ENCODE measurements at regions of chr16 and their contacts with region 1.

Region 1: GRCh38 chr16:57994778-57995177 is 5.7 kb downstream of the ZNF319 start:
- DNase-seq: peak; percentile 47 to 52
- ATAC-seq: peak in 6 of 8 donors; percentile 41 to 73 (median 54)
- H3K4me3 ChIP-seq: no peak overlapping the region
- H3K27ac ChIP-seq: peak overlapping the region in 2 of 10 donors; percentile 35 to 48
- H3K4me1 ChIP-seq: peaks cover 9 to 47% (median 34%) of the 10 kb centered on the region in 9 donors
- H3K27me3 ChIP-seq: no peaks in the 10 kb centered on the region
- CTCF ChIP-seq: peak in 7 of 9 donors; percentile 27 to 60 (median 42)

Region 2: DNA sequence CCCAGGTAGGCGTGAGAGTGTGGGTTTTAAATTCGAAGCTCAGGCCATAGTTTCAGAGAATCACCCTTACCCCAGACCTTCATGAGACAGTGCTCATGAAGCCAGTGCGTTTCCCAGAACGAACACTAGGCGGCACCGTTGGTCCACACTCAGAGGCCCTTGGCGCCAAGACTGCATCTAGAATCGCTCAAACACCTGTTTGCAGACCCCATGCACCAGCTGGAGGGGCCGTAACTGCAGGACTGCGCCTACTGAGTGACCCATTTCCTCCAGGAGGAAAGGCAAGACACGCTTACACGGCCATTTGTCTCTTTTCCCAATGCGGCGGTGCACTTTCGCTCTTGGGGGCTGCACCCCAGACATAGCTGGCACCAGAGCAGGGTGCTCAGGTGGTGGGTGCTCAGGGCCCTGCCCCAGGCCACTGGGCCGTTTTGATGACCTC is 418.3 kb before region 1 on chr16:
- intact Hi-C with region 1: loop called in 2 of 10 experiments (anchors 5 to 10 kb)
- DNase-seq: peak; percentile 66 to 77
- ATAC-seq: peak in 7 of 8 donors; percentile 44 to 85 (median 79)
- H3K4me3 ChIP-seq: no peak overlapping the region
- H3K27ac ChIP-seq: no peak overlapping the region
- H3K4me1 ChIP-seq: peaks cover 0 to 10% (median 0%) of the 10 kb centered on the region in 9 donors
- H3K27me3 ChIP-seq: peaks cover 0 to 34% (median 10%) of the 10 kb centered on the region in 7 donors
- CTCF ChIP-seq: peak; percentile 87 to 98 (median 94)

Region 3: GRCh38 chr16:57591086-57591869 is 403.5 kb before region 1 on chr16:
- intact Hi-C with region 1: loop called in 1 of 10 experiments (anchors 10 kb)
- DNase-seq: peak; percentile 65 to 74
- ATAC-seq: peak; percentile 86 to 95 (median 92)
- H3K4me3 ChIP-seq: no peak overlapping the region
- H3K27ac ChIP-seq: peak overlapping the region in 1 of 10 donors; percentile 53
- H3K4me1 ChIP-seq: peaks cover 0 to 33% (median 4%) of the 10 kb centered on the region in 9 donors
- H3K27me3 ChIP-seq: peaks cover 0 to 4% (median 0%) of the 10 kb centered on the region in 7 donors
- CTCF ChIP-seq: peak; percentile 80 to 95 (median 91)

Region 4: DNA sequence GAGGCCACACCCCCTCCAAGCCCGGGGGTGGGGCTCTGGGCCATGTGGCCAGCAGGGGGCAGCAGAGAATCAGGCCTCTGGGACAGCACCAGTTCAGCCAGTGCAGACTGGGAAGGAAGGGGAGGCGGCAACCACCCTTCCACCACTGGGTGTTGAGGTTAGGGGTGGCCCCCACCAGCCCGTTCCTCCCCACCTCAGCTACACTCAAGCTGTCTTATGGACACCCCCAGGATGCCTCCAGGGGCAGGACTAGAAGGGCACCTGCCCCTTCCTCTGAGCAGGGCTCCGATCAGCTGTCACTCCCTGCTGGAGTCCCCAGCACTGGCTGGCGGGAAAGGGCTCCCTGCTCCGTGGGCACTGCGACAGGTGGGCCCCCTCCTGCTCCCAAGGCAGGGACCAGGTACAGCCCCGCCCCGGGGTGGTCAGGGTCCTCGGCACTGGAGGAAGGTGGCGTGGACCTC is 237.4 kb before region 1 on chr16:
- intact Hi-C with region 1: loop called in 3 of 10 experiments (anchors 5 to 10 kb)
- DNase-seq: peak; percentile 90 to 93
- ATAC-seq: peak; percentile 81 to 93 (median 90)
- H3K4me3 ChIP-seq: no peak overlapping the region
- H3K27ac ChIP-seq: peak overlapping the region in 8 of 10 donors; percentile 54 to 80 (median 67)
- H3K4me1 ChIP-seq: peaks cover 0 to 35% (median 17%) of the 10 kb centered on the region in 9 donors
- H3K27me3 ChIP-seq: no peaks in the 10 kb centered on the region
- CTCF ChIP-seq: peak; percentile 96 to 100 (median 99)

Region 5: DNA sequence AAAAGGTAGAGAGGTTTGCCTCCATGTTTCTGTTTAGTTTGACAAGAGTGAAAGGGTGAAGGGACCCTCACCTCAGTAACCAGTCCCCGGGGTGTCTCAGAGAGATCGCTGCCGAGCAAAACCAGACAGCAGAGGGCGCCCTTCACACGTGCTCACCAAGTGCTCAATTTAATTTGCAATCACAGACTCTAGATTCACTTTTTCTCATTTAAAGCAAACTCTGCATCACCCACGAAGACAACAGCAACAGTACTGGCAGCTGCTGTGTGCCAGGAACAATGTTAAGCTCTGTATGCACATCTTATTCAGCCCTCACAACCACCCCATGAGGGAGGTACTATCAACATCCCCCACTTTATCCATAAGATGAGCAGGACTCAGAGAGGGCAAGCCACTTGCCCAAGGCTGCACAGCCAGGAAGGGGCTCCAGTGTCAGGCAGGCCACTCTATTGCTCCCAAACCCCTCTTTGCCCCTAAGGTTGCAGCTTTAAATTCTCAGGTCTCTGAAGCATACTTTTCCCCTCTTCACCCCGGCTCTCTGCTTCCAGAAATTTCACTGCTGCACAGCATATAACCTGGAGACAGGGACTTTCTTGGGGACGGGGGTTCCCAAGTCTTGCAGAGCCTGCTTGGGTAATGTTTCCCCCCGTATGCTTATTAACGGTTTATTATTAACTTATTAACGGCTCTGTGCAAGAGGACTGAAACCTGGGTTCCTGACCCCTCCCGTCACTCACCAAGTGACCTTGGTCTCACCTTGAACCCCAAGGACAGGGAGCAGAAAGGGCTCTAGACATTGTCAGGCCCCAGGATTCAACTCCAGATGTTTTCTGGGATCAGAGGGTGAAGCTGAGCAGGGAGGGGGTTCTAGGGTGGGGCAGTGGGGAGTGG is 94.8 kb before region 1 on chr16:
- intact Hi-C with region 1: loop called in 4 of 10 experiments (anchors 2 to 5 kb)
- DNase-seq: peak; percentile 64 to 78
- ATAC-seq: peak; percentile 61 to 87 (median 76)
- H3K4me3 ChIP-seq: no peak overlapping the region
- H3K27ac ChIP-seq: no peak overlapping the region
- H3K4me1 ChIP-seq: peaks cover 0 to 12% (median 0%) of the 10 kb centered on the region in 9 donors
- H3K27me3 ChIP-seq: peaks cover 0 to 44% (median 22%) of the 10 kb centered on the region in 7 donors
- CTCF ChIP-seq: peak; percentile 61 to 95 (median 93)

Region 6: GRCh38 chr16:57906382-57907316 is 88.1 kb before region 1 on chr16:
- intact Hi-C with region 1: loop called in 3 of 10 experiments (anchors 5 kb)
- DNase-seq: peak in 1 of 2 donors; percentile 25
- ATAC-seq: peak in 6 of 8 donors; percentile 38 to 58 (median 42)
- H3K4me3 ChIP-seq: no peak overlapping the region
- H3K27ac ChIP-seq: no peak overlapping the region
- H3K4me1 ChIP-seq: peaks cover 0 to 4% (median 0%) of the 10 kb centered on the region in 9 donors
- H3K27me3 ChIP-seq: peaks cover 0 to 31% (median 20%) of the 10 kb centered on the region in 7 donors
- CTCF ChIP-seq: peak; percentile 31 to 67 (median 55)